ENCODE measurements at regions of chr18 and their contacts with region 1.

Region 1: GRCh38 chr18:3760741-3761140 is 310.8 kb downstream of the TGIF1 start:
- DNase-seq: no peak
- ATAC-seq: no peak
- H3K4me3 ChIP-seq: no peak overlapping the region
- H3K27ac ChIP-seq: peak overlapping the region in 1 of 10 donors; percentile 31
- H3K4me1 ChIP-seq: peaks cover 0 to 8% (median 0%) of the 10 kb centered on the region in 9 donors
- H3K27me3 ChIP-seq: peaks cover 0 to 3% (median 0%) of the 10 kb centered on the region in 7 donors
- CTCF ChIP-seq: no peak

Region 2: DNA sequence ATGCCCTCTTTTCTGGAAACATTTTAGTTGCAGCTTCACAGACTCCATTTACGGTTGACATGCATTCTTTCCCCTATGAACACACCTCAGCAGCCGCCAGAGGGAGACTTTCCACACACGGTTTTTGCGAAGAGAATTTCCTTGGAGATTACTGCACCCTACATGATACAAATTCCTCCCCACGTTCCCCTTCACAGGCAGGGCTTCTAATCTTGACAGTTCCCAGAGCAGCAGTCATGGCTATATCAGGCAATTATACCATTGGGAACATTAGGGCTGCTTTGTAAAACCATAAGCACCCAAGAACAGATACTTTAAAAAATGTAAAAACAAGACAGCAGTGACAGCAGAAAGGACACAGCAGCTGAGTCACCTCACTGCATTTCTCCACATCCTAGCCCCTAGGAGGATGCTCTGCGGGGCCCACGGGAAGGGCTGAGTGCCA is 57.0 kb before region 1 on chr18:
- intact Hi-C with region 1: loop called in 2 of 10 experiments (anchors 10 kb)
- DNase-seq: peak; percentile 44 to 64
- ATAC-seq: peak; percentile 53 to 91 (median 79)
- H3K4me3 ChIP-seq: peak overlapping the region in 4 of 10 donors; percentile 3 to 26 (median 18)
- H3K27ac ChIP-seq: peak overlapping the region in 4 of 10 donors; percentile 32 to 60 (median 42)
- H3K4me1 ChIP-seq: peaks cover 0 to 25% (median 12%) of the 10 kb centered on the region in 9 donors
- H3K27me3 ChIP-seq: no peaks in the 10 kb centered on the region
- CTCF ChIP-seq: peak; percentile 33 to 76 (median 66)

Region 3: GRCh38 chr18:3710712-3711269 is 50.0 kb before region 1 on chr18:
- intact Hi-C with region 1: loop called in 3 of 10 experiments (anchors 10 kb)
- DNase-seq: peak in 1 of 2 donors; percentile 35
- ATAC-seq: peak; percentile 47 to 81 (median 76)
- H3K4me3 ChIP-seq: no peak overlapping the region
- H3K27ac ChIP-seq: peak overlapping the region in 1 of 10 donors; percentile 47
- H3K4me1 ChIP-seq: peaks cover 0 to 18% (median 0%) of the 10 kb centered on the region in 9 donors
- H3K27me3 ChIP-seq: peaks cover 0 to 3% (median 0%) of the 10 kb centered on the region in 7 donors
- CTCF ChIP-seq: no peak

Region 4: GRCh38 chr18:4004183-4004829 is 243.6 kb after region 1 on chr18:
- intact Hi-C with region 1: loop called in 1 of 10 experiments (anchors 5 kb)
- DNase-seq: no peak
- ATAC-seq: no peak
- H3K4me3 ChIP-seq: no peak overlapping the region
- H3K27ac ChIP-seq: no peak overlapping the region
- H3K4me1 ChIP-seq: peaks cover 0 to 11% (median 0%) of the 10 kb centered on the region in 9 donors
- H3K27me3 ChIP-seq: no peaks in the 10 kb centered on the region
- CTCF ChIP-seq: no peak

Region 5: DNA sequence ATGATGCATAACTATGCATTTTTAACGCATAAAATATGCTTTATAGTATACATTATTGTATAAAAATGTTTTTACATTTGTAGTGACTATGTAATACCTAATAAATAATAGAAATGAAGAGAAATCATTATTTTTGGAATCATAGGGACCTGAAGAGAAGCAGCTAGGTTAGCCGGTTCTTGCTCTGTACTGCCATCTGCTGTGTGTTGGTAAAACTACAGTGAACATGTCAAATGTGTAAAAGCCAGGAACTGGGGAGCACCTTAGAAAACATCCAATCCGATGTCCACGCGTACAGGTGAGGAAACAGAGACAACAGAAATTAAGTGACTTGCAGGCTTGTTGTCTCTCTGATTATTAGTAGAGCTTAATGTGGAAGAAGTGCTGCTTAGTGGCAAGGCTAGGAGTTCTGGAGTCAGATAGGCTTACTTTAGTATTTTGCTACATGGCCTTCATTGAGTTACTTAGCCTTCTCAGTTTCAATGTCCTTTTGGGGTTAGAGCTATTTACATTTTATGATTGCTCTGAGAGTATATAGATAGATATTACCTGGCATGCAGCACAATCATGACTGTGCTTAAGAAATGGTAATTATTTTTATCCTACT is 307.9 kb after region 1 on chr18:
- intact Hi-C with region 1: loop called in 2 of 10 experiments (anchors 10 kb)
- DNase-seq: peak in 1 of 2 donors; percentile 31
- ATAC-seq: peak in 1 of 8 donors; percentile 39
- H3K4me3 ChIP-seq: no peak overlapping the region
- H3K27ac ChIP-seq: no peak overlapping the region
- H3K4me1 ChIP-seq: no peaks in the 10 kb centered on the region
- H3K27me3 ChIP-seq: no peaks in the 10 kb centered on the region
- CTCF ChIP-seq: peak; percentile 42 to 83 (median 75)